ENCODE measurements at regions of chr7 and their contacts with region 1.

Region 1: GRCh38 chr7:22949944-22950343 is 64.0 kb downstream of the HYCC1 start:
- DNase-seq: no peak
- ATAC-seq: no peak

Region 2: DNA sequence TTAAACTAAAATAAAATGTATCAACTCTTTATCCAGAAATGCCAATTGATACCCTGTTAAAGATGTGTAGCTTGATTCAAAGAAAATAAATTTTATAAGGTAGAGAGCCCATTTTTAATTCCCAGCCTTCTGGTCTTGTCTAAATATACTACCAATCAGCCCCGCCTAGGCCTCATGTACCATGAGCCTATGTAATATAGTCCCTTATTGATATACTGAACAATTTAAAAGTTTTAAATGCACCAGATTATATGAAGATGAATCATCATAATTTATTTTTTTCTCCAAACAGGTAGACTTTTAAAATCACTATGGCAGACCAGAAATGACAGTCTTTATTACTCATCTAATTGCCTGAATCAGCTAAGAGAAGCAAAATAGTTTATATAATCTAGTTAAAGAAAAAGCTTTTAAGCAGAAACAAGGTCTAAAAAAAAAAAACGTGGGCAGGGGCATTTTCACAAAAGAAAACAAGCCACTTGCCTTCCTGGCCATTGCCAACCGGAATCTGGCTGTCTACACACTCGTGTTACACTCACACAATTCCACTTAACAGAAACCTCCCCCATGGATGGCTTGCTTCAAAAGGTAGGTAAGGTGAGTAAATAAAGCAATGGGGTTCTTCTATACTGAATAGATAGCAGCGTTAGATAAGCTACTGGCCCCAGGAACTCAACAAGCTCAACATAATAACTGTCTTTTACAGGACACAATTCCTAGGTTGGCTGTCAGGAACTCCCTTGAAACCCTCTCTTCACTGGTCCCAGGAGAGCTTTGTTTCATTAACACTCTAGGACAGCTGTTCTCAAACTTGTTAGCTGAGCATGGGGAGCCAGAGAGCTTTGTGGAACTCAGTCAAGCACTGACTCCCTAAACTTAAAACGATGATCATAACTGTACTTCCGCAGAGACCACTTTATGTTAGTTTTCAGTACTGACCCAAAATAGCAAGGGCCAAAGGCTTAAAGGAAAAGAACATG is 630.2 kb before region 1 on chr7:
- intact Hi-C with region 1: no loop called
- DNase-seq: no peak
- ATAC-seq: no peak

Region 3: DNA sequence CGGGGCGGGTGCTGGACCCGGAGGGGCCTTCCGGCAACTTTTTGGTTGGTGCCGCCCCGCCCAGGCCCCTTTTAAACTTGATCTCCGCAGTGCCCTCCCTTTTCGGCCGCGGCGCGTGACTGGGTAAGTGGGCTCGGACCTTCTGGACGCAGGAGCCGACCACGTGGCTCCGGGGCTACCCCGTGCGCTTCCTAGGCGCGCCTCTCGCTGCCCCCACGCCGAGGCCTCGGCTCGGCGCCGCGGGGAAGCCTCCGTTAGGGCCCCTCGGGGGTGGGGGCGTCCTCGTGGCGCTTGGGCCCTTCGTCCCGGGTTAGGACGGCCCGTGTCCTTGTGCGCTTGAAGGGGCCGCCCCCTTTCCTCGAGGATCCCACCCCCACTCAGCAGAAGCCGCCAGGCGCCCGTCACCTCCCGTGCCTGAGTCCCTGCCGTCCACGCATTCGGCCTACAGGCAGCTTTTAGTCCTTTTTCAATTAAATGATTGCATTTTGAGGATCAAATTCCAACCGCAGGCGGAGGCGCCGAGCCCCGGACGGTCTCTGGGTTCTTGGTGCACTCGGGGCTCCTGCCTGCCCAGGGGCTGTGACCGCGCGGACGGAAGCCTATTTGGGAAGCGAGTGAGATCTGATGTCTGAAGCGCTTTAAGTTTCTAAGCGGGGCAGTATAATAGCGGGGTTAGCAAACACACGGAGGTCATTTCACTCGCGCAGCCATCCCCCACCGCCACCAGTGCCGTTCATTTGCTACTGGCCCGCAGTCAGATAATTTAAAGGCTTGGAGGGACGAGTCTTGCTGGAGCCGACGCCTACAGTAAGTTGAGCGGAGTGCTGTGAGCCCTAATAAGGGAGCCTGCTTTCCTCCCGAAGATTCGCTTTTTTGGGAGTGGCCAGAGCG is 95.5 kb before region 1 on chr7:
- intact Hi-C with region 1: loop called in 1 of 2 experiments (anchors 10 kb)
- DNase-seq: peak; percentile 95
- ATAC-seq: peak; percentile 92 to 94

Measured in left cardiac atrium (tissue), 4 donors.